Activated B cell treated with CpG ODN at 0.5 μM for 24 hours (primary cell): ENCODE measurements at regions of chr16 and their contacts with region 1.

Region 1: DNA sequence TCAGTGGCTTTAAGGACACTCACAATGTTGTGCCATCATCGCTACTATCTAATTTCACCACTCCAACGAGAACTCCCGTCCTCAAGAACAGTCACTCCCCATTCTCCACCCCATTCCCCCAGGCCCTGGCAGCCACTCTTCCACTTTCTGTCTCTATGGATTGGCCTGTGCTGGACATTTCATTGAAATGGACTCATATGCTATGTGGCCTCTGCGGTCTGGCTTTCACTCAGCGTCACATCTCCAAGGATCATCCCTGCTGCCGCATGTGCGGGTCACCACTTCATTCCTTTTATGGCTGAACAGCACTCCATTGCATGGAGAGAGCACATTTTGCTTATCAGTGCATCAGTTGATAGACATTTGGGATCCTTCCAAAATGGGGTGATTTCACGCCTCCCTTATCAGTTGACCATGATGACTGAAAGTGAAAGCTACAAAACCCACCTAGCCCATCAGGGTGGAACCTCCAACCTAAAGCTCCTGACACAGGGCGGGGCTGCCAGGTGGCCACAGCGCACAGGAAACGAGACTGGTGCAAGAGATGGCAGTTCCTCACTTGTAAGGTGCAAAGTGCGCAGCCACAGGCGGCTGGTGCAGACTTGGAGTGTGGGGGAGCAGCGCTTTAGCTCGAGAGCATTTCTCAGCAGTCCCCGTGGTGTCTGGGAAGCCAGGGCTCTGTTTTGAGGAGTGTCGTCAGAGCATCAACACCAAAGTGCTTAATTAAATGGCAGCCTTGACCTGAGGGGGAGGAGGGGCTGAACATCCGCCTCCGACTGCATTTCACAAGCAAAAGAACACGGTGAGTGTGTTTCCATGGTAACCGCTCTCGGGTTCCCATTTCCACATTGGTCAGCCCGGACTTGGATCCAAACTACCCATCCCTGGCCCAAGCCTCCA is 23.8 kb downstream of the COTL1 start:
- DNase-seq: peak; percentile 65
- ATAC-seq: peak; percentile 82
- H3K4me3 Mint-ChIP-seq: peak overlapping the region; percentile 91
- H3K27ac Mint-ChIP-seq: peak overlapping the region; percentile 91
- H3K4me1 Mint-ChIP-seq: peaks cover 80% of the 10 kb centered on the region
- H3K27me3 Mint-ChIP-seq: no peaks in the 10 kb centered on the region
- CTCF ChIP-seq: no peak

Region 2: GRCh38 chr16:84607694-84608093 is 13.6 kb after region 1 on chr16:
- CTCF ChIA-PET with region 1: interaction called, 3 read pairs
- POLR2A ChIA-PET with region 1: interaction called, 333 read pairs
- intact Hi-C with region 1: loop called (anchors 1 kb)
- DNase-seq: no peak
- ATAC-seq: peak; percentile 72
- H3K4me3 Mint-ChIP-seq: peak overlapping the region; percentile 76
- H3K27ac Mint-ChIP-seq: peak overlapping the region; percentile 95
- H3K4me1 Mint-ChIP-seq: peaks cover 94% of the 10 kb centered on the region
- H3K27me3 Mint-ChIP-seq: no peaks in the 10 kb centered on the region
- CTCF ChIP-seq: no peak

Region 3: DNA sequence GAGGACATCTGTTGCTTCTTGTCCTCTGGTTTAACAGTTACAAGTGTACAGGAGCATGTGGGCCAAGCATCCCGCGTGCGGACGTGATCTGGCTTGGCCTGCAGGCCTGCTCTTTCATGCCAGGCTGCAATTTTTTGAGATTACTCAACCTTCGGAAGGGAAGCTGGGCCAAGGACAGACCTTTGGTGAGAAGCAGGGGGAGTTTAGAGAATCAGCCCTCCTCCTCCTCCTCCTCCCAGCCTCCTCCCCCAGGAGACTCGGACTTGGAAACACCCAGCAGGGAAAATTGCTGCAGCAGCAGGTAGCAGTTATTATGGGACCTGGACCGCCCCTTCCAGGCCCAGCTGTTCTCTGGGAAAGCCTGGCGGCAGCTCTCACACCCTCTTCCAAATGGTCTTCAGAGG is 49.1 kb after region 1 on chr16:
- CTCF ChIA-PET with region 1: no interaction called
- POLR2A ChIA-PET with region 1: no interaction called
- intact Hi-C with region 1: no loop called
- DNase-seq: no peak
- ATAC-seq: no peak
- H3K4me3 Mint-ChIP-seq: no peak overlapping the region
- H3K27ac Mint-ChIP-seq: peak overlapping the region; percentile 92
- H3K4me1 Mint-ChIP-seq: peaks cover 72% of the 10 kb centered on the region
- H3K27me3 Mint-ChIP-seq: no peaks in the 10 kb centered on the region
- CTCF ChIP-seq: no peak